ENCODE measurements at regions of chr3 and their contacts with region 1.

Region 1: DNA sequence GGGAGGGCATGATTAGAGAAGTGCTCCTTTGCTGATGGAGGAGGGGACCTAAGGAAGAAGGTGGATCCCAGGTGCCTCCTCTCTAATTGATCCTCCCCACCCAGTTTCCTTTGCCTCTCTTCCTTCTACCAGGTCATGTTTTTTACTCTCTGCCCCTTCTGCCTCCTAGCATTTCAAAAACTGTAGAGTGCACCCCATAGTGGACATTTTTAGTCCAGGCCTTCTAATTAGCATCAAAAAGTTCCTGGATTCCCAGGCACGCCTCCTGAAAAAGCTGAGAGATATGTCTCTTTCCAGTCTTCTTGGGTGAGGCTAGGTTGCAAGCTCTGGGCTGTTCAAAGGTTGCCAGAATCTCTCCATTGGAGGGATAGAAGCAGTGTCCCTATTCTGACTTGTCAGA is 18.7 kb upstream of the ITGB5 start:
- DNase-seq: no peak
- H3K4me3 Mint-ChIP-seq: no peak overlapping the region
- H3K27ac Mint-ChIP-seq: no peak overlapping the region
- H3K4me1 Mint-ChIP-seq: peaks cover 4% of the 10 kb centered on the region
- H3K27me3 Mint-ChIP-seq: peaks cover 23% of the 10 kb centered on the region

Region 2: DNA sequence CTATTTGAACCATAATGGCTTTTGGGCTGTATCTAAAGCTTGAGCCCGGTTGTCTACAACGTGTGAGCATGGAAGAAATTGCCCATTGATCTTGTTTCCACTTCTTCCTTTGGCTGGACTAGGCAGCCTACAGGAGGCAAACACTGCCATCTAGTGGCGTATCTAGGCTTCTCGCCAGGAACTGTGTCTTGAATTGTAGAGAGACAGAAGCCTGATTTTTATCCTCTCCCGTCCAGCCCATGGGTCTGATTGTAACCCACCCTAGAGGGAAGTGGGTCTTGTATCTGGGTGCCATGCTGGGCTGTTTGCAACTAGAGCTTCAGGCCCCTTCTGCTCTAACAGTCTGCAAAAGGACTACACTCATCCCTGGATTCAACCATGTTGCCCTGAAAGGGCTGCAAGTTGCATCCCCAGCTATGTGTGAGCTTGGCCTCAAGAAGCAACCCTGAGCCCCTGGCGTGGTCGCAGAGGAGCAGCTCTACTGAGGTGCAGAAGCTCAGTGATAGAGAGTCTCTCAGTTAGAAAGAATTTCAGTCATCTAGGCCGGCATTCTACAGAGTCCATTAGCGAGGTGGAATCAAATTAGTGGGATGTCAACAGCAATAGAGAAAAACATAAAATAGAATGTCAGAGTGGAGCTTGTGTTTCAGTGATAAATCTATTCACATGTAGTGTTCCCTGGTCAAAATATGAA is 345.8 kb before region 1 on chr3:
- intact Hi-C with region 1: loop called (anchors 2 kb)
- DNase-seq: peak; percentile 24
- H3K4me3 Mint-ChIP-seq: no peak overlapping the region
- H3K27ac Mint-ChIP-seq: no peak overlapping the region
- H3K4me1 Mint-ChIP-seq: no peaks in the 10 kb centered on the region
- H3K27me3 Mint-ChIP-seq: peaks cover 26% of the 10 kb centered on the region

Region 3: DNA sequence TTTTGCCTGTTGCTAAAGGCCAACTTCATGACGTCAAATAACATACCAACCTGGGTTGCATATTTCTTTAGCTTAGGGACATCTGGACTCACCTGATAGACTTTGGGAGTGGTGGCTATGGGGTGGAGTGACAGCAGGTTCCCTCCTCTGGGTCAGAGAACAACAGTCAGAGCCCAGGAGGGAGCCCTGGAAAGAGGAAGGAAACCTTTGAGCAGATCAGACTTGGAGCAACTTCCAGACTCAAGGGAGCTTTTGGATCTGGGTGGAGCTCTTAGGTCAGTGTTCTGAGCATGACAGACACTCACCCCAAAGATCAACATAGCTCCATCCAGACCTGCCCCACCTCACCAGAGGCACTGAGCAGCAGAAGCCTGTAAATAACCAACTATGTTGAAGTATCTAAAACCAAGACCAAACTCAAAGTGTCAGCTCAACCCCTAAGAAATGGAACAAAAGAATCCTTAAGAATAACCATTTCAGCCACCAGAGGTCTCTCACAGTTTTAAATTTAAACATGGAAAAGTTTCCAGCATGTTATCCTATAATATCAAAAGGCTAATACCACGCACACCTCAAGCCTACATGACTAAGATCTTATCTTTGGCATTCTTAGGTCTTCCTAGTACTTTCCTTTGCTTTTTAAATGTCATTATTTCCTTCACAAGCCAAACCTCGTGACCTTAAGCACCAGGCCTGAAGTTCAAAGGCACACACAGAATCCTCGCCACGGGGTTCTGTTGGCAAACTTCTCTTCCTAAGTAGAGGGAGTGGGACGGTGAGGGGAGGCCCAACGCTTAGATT is 119.2 kb before region 1 on chr3:
- intact Hi-C with region 1: loop called (anchors 1 kb)
- DNase-seq: no peak
- H3K4me3 Mint-ChIP-seq: no peak overlapping the region
- H3K27ac Mint-ChIP-seq: peak overlapping the region; percentile 32
- H3K4me1 Mint-ChIP-seq: peaks cover 16% of the 10 kb centered on the region
- H3K27me3 Mint-ChIP-seq: peaks cover 3% of the 10 kb centered on the region

Region 4: GRCh38 chr3:124802702-124803101 is 103.1 kb before region 1 on chr3:
- intact Hi-C with region 1: no loop called
- DNase-seq: no peak
- H3K4me3 Mint-ChIP-seq: no peak overlapping the region
- H3K27ac Mint-ChIP-seq: no peak overlapping the region
- H3K4me1 Mint-ChIP-seq: no peaks in the 10 kb centered on the region
- H3K27me3 Mint-ChIP-seq: peaks cover 3% of the 10 kb centered on the region

Region 5: GRCh38 chr3:125055913-125056745 is 150.3 kb after region 1 on chr3 and contains the start of gene HEG1:
- intact Hi-C with region 1: no loop called
- DNase-seq: peak; percentile 77
- H3K4me3 Mint-ChIP-seq: peak within 1 kb of the TSS; percentile 97
- H3K27ac Mint-ChIP-seq: peak within 1 kb of the TSS; percentile 87
- H3K4me1 Mint-ChIP-seq: peaks cover 38% of the 10 kb centered on the region
- H3K27me3 Mint-ChIP-seq: peaks cover 18% of the 10 kb centered on the region
- total RNA-seq, gene HEG1: 43.7 and 45.1 TPM in 2 replicates

Measured in activated T-helper 1 cell treated with anti-CD3 and anti-CD28 coated beads, Interleukin-12 subunit alpha, Interleukin-12 subunit beta, Interleukin-2, Interleukin-4 antibody, amounts not matched to agents 30 ng/mL and 10 ng/mL and 1 ng/mL, durations not matched to agents 14 hours and 24 hours and 36 hours (primary cell).